WTC11 (cell line): ENCODE measurements at regions of chr12 and their contacts with region 1.

Region 1: GRCh38 chr12:113424915-113425823 is 3.0 kb downstream of the SDSL start:
- DNase-seq: peak; percentile 80
- ATAC-seq: peak; percentile 67
- H3K4me3 Mint-ChIP-seq: peak overlapping the region; percentile 75
- H3K27ac Mint-ChIP-seq: peak overlapping the region; percentile 93
- H3K4me1 Mint-ChIP-seq: peaks cover 16% of the 10 kb centered on the region
- H3K27me3 Mint-ChIP-seq: no peaks in the 10 kb centered on the region; the same call in 1 of the 2 replicates
- CTCF ChIP-seq: peak; percentile 94

Region 2: GRCh38 chr12:112716099-112717093 is 708.8 kb before region 1 on chr12:
- CTCF ChIA-PET with region 1: no interaction called
- POLR2A ChIA-PET with region 1: no interaction called
- DNase-seq: peak; percentile 28
- ATAC-seq: peak; percentile 98
- H3K4me3 Mint-ChIP-seq: no peak overlapping the region
- H3K27ac Mint-ChIP-seq: no peak overlapping the region
- H3K4me1 Mint-ChIP-seq: peaks cover 6% of the 10 kb centered on the region
- H3K27me3 Mint-ChIP-seq: peaks cover 5% of the 10 kb centered on the region
- CTCF ChIP-seq: no peak

Region 3: GRCh38 chr12:113152835-113153814 is 272.0 kb before region 1 on chr12:
- CTCF ChIA-PET with region 1: interaction called, 10 read pairs
- POLR2A ChIA-PET with region 1: no interaction called
- DNase-seq: peak; percentile 72
- ATAC-seq: peak; percentile 49
- H3K4me3 Mint-ChIP-seq: peak overlapping the region; percentile 67
- H3K27ac Mint-ChIP-seq: no peak overlapping the region
- H3K4me1 Mint-ChIP-seq: peaks cover 21% of the 10 kb centered on the region
- H3K27me3 Mint-ChIP-seq: peaks cover 58% of the 10 kb centered on the region
- CTCF ChIP-seq: no peak

Region 4: DNA sequence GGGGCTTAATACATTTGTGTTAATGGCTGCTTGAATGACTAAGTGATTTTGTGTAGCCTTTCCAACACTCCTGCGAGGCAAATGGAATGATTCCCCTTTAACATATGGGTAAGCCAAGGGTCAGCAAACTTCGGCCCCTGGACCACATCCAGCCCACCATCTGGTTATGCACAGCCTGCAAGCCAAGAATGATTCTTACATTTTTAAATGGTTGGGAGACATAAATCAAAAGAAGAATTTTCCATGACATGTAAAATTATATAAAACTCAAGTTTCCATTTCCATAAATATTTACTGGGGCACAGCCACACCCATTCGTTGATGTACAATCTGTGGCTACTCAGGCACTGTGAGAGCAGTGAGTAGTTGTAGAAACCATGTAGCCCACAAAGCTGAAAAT is 99.3 kb before region 1 on chr12:
- CTCF ChIA-PET with region 1: interaction called, 17 read pairs
- POLR2A ChIA-PET with region 1: no interaction called
- DNase-seq: no peak
- ATAC-seq: no peak
- H3K4me3 Mint-ChIP-seq: no peak overlapping the region
- H3K27ac Mint-ChIP-seq: no peak overlapping the region
- H3K4me1 Mint-ChIP-seq: 0 out of 2 replicates have a peak, but pooled peaks cover 2% of the 10 kb centered on the region
- H3K27me3 Mint-ChIP-seq: no peaks in the 10 kb centered on the region
- CTCF ChIP-seq: no peak

Region 5: GRCh38 chr12:113358381-113359132 is 66.6 kb before region 1 on chr12 and contains the start of gene PLBD2:
- CTCF ChIA-PET with region 1: interaction called, 26 read pairs
- POLR2A ChIA-PET with region 1: interaction called, 3 read pairs
- DNase-seq: peak; percentile 95
- ATAC-seq: peak; percentile 95
- H3K4me3 Mint-ChIP-seq: peak within 1 kb of the TSS; percentile 88
- H3K27ac Mint-ChIP-seq: peak within 1 kb of the TSS; percentile 78
- H3K4me1 Mint-ChIP-seq: peaks cover 18% of the 10 kb centered on the region
- H3K27me3 Mint-ChIP-seq: no peaks in the 10 kb centered on the region
- CTCF ChIP-seq: no peak
- total RNA-seq, gene PLBD2: 34.8 to 39.4 TPM (median 35.6 TPM) in 3 replicates

Region 6: DNA sequence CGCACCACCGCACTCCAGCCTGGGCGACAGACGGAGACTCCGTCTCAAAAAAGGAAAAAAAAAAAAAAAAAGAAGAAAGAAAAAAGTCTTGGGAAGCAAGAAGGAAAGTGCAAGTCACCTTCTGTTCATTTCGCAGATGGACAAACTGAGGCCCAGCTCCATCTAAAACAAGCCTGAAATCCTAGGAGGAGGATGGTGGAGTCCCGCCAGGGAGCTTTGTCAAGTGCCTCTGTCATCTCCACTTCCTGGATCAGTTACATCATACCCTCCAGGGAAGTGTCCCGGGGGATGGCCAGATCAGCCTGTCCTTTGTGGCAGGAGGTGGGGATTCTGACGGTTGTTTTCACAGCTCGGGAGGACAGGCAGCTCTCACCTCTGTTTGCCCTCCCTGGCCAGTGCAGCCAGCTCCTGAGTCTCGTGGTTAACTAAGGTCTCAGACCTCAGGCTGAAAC is 11.7 kb before region 1 on chr12:
- CTCF ChIA-PET with region 1: interaction called, 19 read pairs
- POLR2A ChIA-PET with region 1: no interaction called
- DNase-seq: no peak
- ATAC-seq: no peak
- H3K4me3 Mint-ChIP-seq: no peak overlapping the region
- H3K27ac Mint-ChIP-seq: no peak overlapping the region
- H3K4me1 Mint-ChIP-seq: peaks cover 6% of the 10 kb centered on the region
- H3K27me3 Mint-ChIP-seq: no peaks in the 10 kb centered on the region
- CTCF ChIP-seq: no peak

Region 7: DNA sequence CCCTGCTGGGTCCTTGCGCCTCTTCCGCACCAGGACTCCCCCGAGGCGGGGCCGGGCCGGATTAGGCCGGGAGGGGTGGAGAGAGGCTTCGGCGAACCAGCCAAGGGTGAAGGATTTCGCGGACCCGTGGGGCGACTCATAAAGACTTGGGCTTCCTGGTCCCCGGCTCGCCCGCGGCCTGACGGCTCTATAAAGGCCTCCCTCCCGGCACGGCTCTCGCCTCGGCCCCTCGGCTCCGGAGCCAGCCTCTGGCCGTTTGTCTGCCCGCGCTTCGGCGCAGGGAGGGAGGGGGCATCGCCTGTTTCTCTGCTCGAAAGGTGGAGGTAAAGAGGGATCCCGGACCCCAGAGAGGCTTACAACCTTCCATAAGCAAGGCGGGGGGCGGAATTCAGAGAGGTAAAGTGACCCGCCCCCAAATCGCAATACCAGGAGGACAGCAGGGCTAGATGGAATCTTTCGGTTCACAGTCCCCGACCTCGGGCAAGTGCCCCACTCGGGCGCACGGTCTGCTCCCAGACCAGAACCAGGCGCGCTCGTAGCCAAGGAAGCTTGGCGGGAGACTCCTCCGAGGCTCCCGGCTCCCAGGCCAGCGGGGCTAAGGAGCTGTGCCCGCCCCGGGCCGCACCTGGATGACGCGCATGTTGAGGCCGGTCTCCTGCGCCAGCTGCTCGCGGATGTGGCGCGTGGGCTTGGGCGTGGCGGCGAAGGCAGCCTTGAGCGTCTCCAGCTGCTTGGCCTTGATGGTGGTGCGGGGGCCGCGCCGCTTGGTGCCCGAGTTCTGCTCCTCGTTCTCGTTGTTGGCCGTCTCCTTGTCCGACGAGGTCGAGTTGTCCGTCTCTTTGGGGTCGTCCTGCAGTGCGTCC is 42.6 kb after region 1 on chr12:
- CTCF ChIA-PET with region 1: interaction called, 14 read pairs
- POLR2A ChIA-PET with region 1: no interaction called
- DNase-seq: peak; percentile 49
- ATAC-seq: no peak
- H3K4me3 Mint-ChIP-seq: peak overlapping the region; percentile 68
- H3K27ac Mint-ChIP-seq: no peak overlapping the region
- H3K4me1 Mint-ChIP-seq: peaks cover 62% of the 10 kb centered on the region
- H3K27me3 Mint-ChIP-seq: peaks cover 99% of the 10 kb centered on the region
- CTCF ChIP-seq: no peak

Region 8: GRCh38 chr12:113568021-113568420 is 142.9 kb after region 1 on chr12:
- CTCF ChIA-PET with region 1: no interaction called
- POLR2A ChIA-PET with region 1: no interaction called
- DNase-seq: no peak
- ATAC-seq: no peak
- H3K4me3 Mint-ChIP-seq: no peak overlapping the region
- H3K27ac Mint-ChIP-seq: no peak overlapping the region
- H3K4me1 Mint-ChIP-seq: peaks cover 21% of the 10 kb centered on the region
- H3K27me3 Mint-ChIP-seq: no peaks in the 10 kb centered on the region; the same call in 1 of the 2 replicates
- CTCF ChIP-seq: no peak